CD8-positive, alpha-beta memory T cell (primary cell): ENCODE measurements at regions of chr2 and their contacts with region 1.

Region 1: DNA sequence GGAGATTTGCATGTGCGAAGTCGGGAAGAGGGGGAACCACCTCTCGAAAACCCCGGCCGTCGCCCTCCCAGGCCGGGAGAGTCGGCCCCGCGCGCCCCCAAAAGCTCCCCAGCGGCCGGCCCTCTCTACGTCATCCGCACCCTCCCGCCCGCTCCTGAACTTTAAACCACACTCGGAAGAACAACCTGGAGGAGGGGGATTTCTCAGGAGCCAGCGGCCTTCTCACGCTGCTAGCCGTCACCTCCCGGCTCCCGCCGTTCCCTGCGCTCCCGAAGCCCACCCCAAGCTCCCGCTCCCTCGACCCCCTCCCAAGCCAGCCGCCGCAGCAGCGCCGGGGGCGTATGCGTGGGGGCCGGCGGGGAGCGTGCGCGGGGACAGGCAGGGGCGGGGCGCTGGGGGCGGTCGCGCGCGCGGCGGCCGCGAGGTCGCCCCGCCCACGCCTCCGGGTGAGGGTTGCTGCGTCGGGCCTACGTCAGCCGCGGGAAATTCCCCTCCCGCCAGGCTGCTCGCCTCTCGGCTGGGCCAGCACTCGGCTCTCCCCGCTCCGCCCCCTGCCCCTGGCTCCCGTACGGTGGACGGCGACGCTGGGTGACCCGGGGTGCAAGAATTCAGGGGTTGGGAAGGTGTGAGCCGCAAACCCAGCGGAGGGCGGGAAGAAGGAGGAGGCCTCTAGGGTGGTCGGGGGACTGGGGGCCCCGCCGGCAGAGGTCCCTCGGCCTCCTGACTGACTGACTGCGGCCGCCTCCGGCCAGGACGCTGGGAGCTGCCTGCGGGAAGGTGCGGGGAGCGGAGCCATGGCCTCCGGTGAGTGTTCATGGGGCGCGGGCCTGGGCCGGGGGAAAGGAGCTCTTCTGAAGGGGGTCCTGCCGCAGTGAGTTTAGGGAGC is at the start of gene REL:
- DNase-seq: peak; percentile 87 to 93 (median 89)
- H3K4me3 ChIP-seq: peak within 1 kb of the TSS; percentile 78
- H3K4me3 Mint-ChIP-seq: peak within 1 kb of the TSS; percentile 91 to 100 (median 97)
- H3K27ac ChIP-seq: peak within 1 kb of the TSS; percentile 100
- H3K27ac Mint-ChIP-seq: peak within 1 kb of the TSS; percentile 96 to 100 (median 99)
- H3K4me1 ChIP-seq: peaks cover 28% of the 10 kb centered on the region
- H3K4me1 Mint-ChIP-seq: peaks cover 23 to 38% (median 38%) of the 10 kb centered on the region in 3 donors
- H3K27me3 ChIP-seq: no peaks in the 10 kb centered on the region
- H3K27me3 Mint-ChIP-seq: peaks cover 0 to 2% of the 10 kb centered on the region in 2 donors
- total RNA-seq, gene REL: 45.6 to 47.6 TPM

Region 2: GRCh38 chr2:60806988-60807681 is 74.2 kb before region 1 on chr2:
- CTCF ChIA-PET with region 1: interaction called, 16 read pairs
- POLR2A ChIA-PET with region 1: interaction called, 4 read pairs
- DNase-seq: peak; percentile 10 to 48 (median 23)
- H3K4me3 ChIP-seq: peak overlapping the region; percentile 13
- H3K4me3 Mint-ChIP-seq: peak overlapping the region in 5 of 7 donors; percentile 43 to 67 (median 63)
- H3K27ac ChIP-seq: peak overlapping the region; percentile 4
- H3K27ac Mint-ChIP-seq: peak overlapping the region; percentile 72 to 97 (median 89)
- H3K4me1 ChIP-seq: peaks cover 29% of the 10 kb centered on the region
- H3K4me1 Mint-ChIP-seq: peaks cover 35 to 51% (median 40%) of the 10 kb centered on the region in 3 donors
- H3K27me3 ChIP-seq: no peaks in the 10 kb centered on the region
- H3K27me3 Mint-ChIP-seq: no peaks in the 10 kb centered on the region

Region 3: DNA sequence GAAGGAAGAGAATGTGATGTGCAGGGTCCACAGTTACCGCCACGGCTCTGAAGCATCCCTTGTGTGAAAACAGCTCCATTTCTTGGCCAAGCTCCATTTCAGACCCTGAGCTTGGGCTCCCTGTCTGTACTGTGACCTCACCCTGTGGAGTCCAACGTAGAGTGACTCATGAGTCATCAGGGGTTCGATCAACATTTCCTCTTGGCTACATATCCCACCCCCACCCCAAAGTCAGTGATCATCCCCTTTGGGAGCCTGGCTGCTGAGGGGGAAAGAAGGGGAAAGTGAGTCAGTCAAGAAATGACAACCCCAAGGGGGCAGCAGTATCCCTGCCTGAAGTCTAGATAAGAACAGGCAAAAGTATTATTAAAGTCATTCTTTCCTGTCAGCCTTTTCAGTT is 63.0 kb before region 1 on chr2:
- CTCF ChIA-PET with region 1: interaction called, 3 read pairs
- POLR2A ChIA-PET with region 1: interaction called, 16 read pairs
- DNase-seq: peak in 3 of 5 donors; percentile 6 to 58 (median 8)
- H3K4me3 ChIP-seq: no peak overlapping the region
- H3K4me3 Mint-ChIP-seq: peak overlapping the region in 6 of 7 donors; percentile 19 to 66 (median 34)
- H3K27ac ChIP-seq: no peak overlapping the region
- H3K27ac Mint-ChIP-seq: peak overlapping the region; percentile 31 to 100 (median 94)
- H3K4me1 ChIP-seq: peaks cover 31% of the 10 kb centered on the region
- H3K4me1 Mint-ChIP-seq: peaks cover 45 to 56% (median 49%) of the 10 kb centered on the region in 3 donors
- H3K27me3 ChIP-seq: no peaks in the 10 kb centered on the region
- H3K27me3 Mint-ChIP-seq: peaks cover 0 to 7% of the 10 kb centered on the region in 2 donors

Region 4: GRCh38 chr2:60867848-60868247 is 13.4 kb before region 1 on chr2:
- CTCF ChIA-PET with region 1: interaction called, 9 read pairs
- POLR2A ChIA-PET with region 1: interaction called, 13 read pairs
- DNase-seq: peak in 4 of 5 donors; percentile 5 to 56 (median 50)
- H3K4me3 ChIP-seq: no peak overlapping the region
- H3K4me3 Mint-ChIP-seq: peak overlapping the region; percentile 10 to 78 (median 43)
- H3K27ac ChIP-seq: no peak overlapping the region
- H3K27ac Mint-ChIP-seq: peak overlapping the region; percentile 61 to 97 (median 94)
- H3K4me1 ChIP-seq: peaks cover 19% of the 10 kb centered on the region
- H3K4me1 Mint-ChIP-seq: peaks cover 17 to 26% (median 20%) of the 10 kb centered on the region in 3 donors
- H3K27me3 ChIP-seq: no peaks in the 10 kb centered on the region
- H3K27me3 Mint-ChIP-seq: peaks cover 6 to 12% of the 10 kb centered on the region in 2 donors

Region 5: DNA sequence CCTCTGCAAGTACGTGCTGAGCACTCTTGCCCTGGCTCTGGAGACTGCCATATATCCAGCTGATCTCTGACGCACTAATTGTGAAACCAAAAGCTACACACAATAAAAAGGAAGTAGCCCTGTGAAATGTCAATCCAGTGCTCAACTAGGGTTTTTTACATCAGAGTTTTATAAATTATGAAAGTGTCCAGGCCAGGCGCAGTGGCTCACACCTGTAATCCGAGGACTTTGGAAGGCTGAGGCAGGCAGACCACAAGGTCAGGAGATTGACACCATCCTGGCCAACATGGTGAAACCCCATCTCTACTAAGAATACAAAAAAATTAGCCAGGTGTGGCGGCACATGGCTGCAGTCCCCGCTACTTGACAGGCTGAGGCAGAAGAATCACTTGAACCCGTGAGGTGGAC is 111.7 kb after region 1 on chr2:
- CTCF ChIA-PET with region 1: interaction called, 9 read pairs
- POLR2A ChIA-PET with region 1: interaction called, 21 read pairs
- DNase-seq: peak in 2 of 5 donors; percentile 57 to 63
- H3K4me3 ChIP-seq: peak overlapping the region; percentile 48
- H3K4me3 Mint-ChIP-seq: peak overlapping the region; percentile 29 to 90 (median 79)
- H3K27ac ChIP-seq: peak overlapping the region; percentile 26
- H3K27ac Mint-ChIP-seq: peak overlapping the region; percentile 74 to 97 (median 93)
- H3K4me1 ChIP-seq: peaks cover 8% of the 10 kb centered on the region
- H3K4me1 Mint-ChIP-seq: peaks cover 13 to 17% (median 16%) of the 10 kb centered on the region in 3 donors
- H3K27me3 ChIP-seq: no peaks in the 10 kb centered on the region
- H3K27me3 Mint-ChIP-seq: no peaks in the 10 kb centered on the region

Region 6: GRCh38 chr2:61042807-61043206 is 161.5 kb after region 1 on chr2:
- CTCF ChIA-PET with region 1: no interaction called
- POLR2A ChIA-PET with region 1: no interaction called
- DNase-seq: no peak
- H3K4me3 ChIP-seq: no peak overlapping the region
- H3K4me3 Mint-ChIP-seq: no peak overlapping the region
- H3K27ac ChIP-seq: no peak overlapping the region
- H3K27ac Mint-ChIP-seq: peak overlapping the region in 2 of 8 donors; percentile 24 to 42
- H3K4me1 ChIP-seq: peaks cover 10% of the 10 kb centered on the region
- H3K4me1 Mint-ChIP-seq: peaks cover 38 to 63% (median 55%) of the 10 kb centered on the region in 3 donors
- H3K27me3 ChIP-seq: no peaks in the 10 kb centered on the region
- H3K27me3 Mint-ChIP-seq: no peaks in the 10 kb centered on the region